ENCODE measurements at regions of chrX and their contacts with region 1.

Region 1: GRCh38 chrX:19372170-19372546 is 28.4 kb downstream of the PDHA1 start:
- DNase-seq: no peak
- ATAC-seq: peak; percentile 75

Region 2: GRCh38 chrX:19532709-19533108 is 160.6 kb after region 1 on chrX:
- intact Hi-C with region 1: loop called (anchors 5 kb)
- DNase-seq: no peak
- ATAC-seq: peak; percentile 72